PC-9 (cell line): ENCODE measurements at regions of chr3 and their contacts with region 1.

Region 1: GRCh38 chr3:167876620-167877281 is 141.2 kb downstream of the SERPINI1 start:
- DNase-seq: no peak
- H3K4me3 ChIP-seq: no peak overlapping the region
- H3K27ac ChIP-seq: no peak overlapping the region
- H3K4me1 ChIP-seq: no peaks in the 10 kb centered on the region
- H3K27me3 ChIP-seq: no peaks in the 10 kb centered on the region
- CTCF ChIP-seq: no peak

Region 2: DNA sequence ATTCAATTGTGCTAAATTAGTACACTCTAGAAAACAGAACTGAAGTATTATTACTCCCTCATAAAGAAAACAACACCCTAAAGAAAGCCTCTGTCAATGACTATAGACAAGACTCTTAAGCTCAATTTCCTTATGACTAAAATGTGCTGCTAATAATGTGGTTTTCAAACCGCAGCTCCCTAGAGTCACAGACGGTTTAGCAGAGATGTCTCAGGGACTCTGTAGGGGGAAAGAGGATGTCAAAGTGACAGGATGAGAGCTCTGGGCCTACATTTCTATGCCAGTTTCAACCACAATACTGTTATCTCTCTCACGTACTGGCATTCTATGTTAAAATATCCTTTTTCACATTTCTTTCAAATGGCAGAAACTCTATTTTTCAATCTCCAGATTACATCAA is 185.4 kb before region 1 on chr3:
- CTCF ChIA-PET with region 1: no interaction called
- POLR2A ChIA-PET with region 1: no interaction called
- intact Hi-C with region 1: loop called (anchors 10 kb)
- DNase-seq: no peak
- H3K4me3 ChIP-seq: no peak overlapping the region
- H3K27ac ChIP-seq: no peak overlapping the region
- H3K4me1 ChIP-seq: no peaks in the 10 kb centered on the region
- H3K27me3 ChIP-seq: no peaks in the 10 kb centered on the region
- CTCF ChIP-seq: no peak